GM10248 (cell line): ENCODE measurements at regions of chr5 and their contacts with region 1.

Region 1: GRCh38 chr5:139392678-139393496 is 2.0 kb downstream of the PROB1 start:
- DNase-seq: peak; percentile 88
- CTCF ChIP-seq: peak; percentile 94

Region 2: GRCh38 chr5:139251281-139251687 is 141.6 kb before region 1 on chr5:
- CTCF ChIA-PET with region 1: interaction called, 11 read pairs
- POLR2A ChIA-PET with region 1: no interaction called
- DNase-seq: peak; percentile 78
- CTCF ChIP-seq: peak; percentile 64

Region 3: GRCh38 chr5:139306197-139306596 is 86.7 kb before region 1 on chr5:
- CTCF ChIA-PET with region 1: no interaction called
- POLR2A ChIA-PET with region 1: no interaction called
- DNase-seq: no peak
- CTCF ChIP-seq: no peak

Region 4: GRCh38 chr5:139341650-139342422 is 51.1 kb before region 1 on chr5 and contains the start of gene PAIP2:
- CTCF ChIA-PET with region 1: interaction called, 20 read pairs
- POLR2A ChIA-PET with region 1: interaction called, 7 read pairs
- DNase-seq: peak; percentile 95
- CTCF ChIP-seq: peak; percentile 85

Region 5: GRCh38 chr5:139374909-139375308 is 18.0 kb before region 1 on chr5:
- CTCF ChIA-PET with region 1: interaction called, 16 read pairs
- POLR2A ChIA-PET with region 1: interaction called, 4 read pairs
- DNase-seq: no peak
- CTCF ChIP-seq: no peak

Region 6: DNA sequence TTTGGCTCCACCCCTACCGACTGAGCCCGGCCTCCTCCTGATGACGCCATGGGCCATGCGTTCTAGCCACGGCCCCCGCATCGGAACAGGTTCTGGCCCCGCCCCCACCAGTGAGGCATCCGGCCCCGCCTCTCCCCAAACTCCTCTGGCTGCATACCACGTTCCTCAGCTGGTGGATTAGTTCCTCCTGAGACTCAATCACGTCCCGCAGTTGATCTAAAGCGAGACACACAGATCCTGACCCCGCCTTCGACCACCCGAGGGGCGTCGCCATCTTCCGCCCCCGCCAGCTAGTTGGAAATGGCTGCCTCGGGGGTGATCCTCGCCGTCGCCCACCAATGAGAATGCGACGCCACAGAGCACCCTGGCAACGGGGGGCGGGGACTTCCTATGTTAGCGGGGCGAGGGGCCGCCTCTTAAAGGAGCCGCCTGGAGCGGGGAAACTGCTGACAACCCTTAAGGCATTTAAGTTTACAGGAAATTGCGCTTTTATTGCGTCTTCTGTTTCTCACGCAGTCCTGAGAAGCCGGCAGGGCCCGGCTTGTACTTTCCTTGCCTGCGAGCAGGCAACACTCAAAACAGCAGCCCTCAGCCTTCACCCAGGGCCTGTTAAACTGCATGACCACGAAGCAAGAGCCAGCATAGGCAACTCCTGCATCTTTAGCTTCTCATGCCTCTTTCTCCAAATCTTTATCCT is 11.0 kb after region 1 on chr5 and contains the start of gene SPATA24:
- CTCF ChIA-PET with region 1: interaction called, 31 read pairs
- POLR2A ChIA-PET with region 1: interaction called, 4 read pairs
- DNase-seq: peak; percentile 97
- CTCF ChIP-seq: no peak